Psoas muscle (tissue), 8 donors: ENCODE measurements at regions of chr5 and their contacts with region 1.

Region 1: GRCh38 chr5:133247881-133248624 is 196.2 kb downstream of the HSPA4 start:
- DNase-seq: peak; percentile 55 to 80
- ATAC-seq: peak; percentile 93 to 96 (median 94)
- H3K4me3 ChIP-seq: no peak overlapping the region
- H3K27ac ChIP-seq: peak overlapping the region; percentile 71
- H3K4me1 ChIP-seq: peaks cover 27% of the 10 kb centered on the region
- H3K27me3 ChIP-seq: no peaks in the 10 kb centered on the region
- CTCF ChIP-seq: peak; percentile 62

Region 2: DNA sequence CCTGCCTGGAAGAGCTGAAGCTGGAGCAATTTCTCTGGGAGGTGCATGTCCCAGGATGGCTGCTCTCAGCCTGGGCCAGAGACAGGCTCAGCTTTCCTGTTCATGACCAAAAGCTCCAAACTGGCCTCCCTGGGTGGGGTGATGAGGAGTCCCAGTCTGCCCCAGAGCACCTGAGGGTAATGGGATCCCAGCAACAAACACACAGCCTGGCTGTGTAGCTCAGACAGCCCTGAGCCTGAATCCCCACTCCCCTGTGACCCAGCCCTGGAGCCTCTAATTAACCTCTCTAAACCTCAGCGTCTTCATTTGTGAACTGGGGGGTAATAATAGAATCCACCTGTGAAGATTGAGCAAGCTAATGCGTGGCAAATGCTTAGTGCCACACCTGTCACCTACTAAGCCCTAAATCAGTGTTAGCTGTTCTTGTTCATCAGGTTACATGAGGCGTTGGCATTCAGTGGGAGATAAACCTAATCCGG is 128.8 kb before region 1 on chr5:
- intact Hi-C with region 1: loop called (anchors 2 to 10 kb)
- DNase-seq: peak in 1 of 2 donors; percentile 78
- ATAC-seq: peak; percentile 82 to 87 (median 84)
- H3K4me3 ChIP-seq: no peak overlapping the region
- H3K27ac ChIP-seq: peak overlapping the region; percentile 88
- H3K4me1 ChIP-seq: peaks cover 67% of the 10 kb centered on the region
- H3K27me3 ChIP-seq: no peaks in the 10 kb centered on the region
- CTCF ChIP-seq: no peak

Region 3: DNA sequence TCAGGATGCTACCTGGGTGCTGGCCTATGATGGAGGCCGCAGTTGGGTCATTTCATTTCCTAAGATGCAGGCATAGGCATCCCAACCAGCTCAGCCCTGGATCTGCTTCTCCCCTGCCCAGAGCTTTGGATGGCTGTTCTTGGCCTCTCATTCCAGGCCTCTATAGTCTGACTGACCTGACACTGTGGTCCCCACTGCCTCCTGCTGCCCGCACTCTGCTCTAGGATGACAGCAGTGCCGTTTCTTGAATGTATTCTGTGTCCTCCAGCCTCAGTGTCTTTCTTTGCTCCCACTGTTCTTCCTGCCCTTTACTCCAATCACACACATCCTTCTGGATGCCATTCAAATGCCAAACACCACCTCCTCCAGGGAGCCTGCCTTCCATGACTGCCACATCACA is 39.4 kb after region 1 on chr5:
- intact Hi-C with region 1: loop called in 1 of 2 experiments (anchors 1 kb)
- DNase-seq: peak; percentile 62 to 66
- ATAC-seq: peak; percentile 29 to 57 (median 47)
- H3K4me3 ChIP-seq: no peak overlapping the region
- H3K27ac ChIP-seq: no peak overlapping the region
- H3K4me1 ChIP-seq: peaks cover 14% of the 10 kb centered on the region
- H3K27me3 ChIP-seq: no peaks in the 10 kb centered on the region
- CTCF ChIP-seq: peak; percentile 66

Region 4: GRCh38 chr5:133298447-133298846 is 50.4 kb after region 1 on chr5:
- intact Hi-C with region 1: no loop called
- DNase-seq: no peak
- ATAC-seq: no peak
- H3K4me3 ChIP-seq: no peak overlapping the region
- H3K27ac ChIP-seq: no peak overlapping the region
- H3K4me1 ChIP-seq: no peaks in the 10 kb centered on the region
- H3K27me3 ChIP-seq: peaks cover 0 to 2% (median 0%) of the 10 kb centered on the region in 3 donors
- CTCF ChIP-seq: no peak

Region 5: DNA sequence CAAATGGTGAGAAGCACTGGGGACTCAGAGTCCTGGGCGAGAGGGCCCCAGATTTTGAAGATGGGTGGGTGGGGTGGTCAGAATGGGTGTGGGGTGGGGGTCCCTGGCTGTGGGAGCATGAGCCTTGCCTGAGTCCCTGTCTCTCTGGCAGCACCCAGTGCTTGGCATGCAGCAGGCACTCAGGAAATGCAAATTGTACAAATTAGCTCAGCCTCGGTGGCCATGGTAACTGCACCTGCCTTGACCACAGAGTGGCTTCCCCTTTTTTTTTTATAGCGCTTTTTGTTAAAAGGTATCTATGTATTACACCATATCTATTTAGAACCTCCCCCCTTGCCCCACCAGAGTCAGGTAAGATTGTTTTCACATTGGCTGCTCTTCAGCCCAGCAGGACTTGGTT is 1805.2 kb after region 1 on chr5:
- intact Hi-C with region 1: no loop called
- DNase-seq: peak in 1 of 2 donors; percentile 12
- ATAC-seq: no peak
- H3K4me3 ChIP-seq: no peak overlapping the region
- H3K27ac ChIP-seq: no peak overlapping the region
- H3K4me1 ChIP-seq: peaks cover 31% of the 10 kb centered on the region
- H3K27me3 ChIP-seq: peaks cover 0 to 3% (median 0%) of the 10 kb centered on the region in 3 donors
- CTCF ChIP-seq: no peak